Activated B cell treated with CpG ODN at 0.5 μM for 24 hours (primary cell): ENCODE measurements at regions of chr6 and their contacts with region 1.

Region 1: DNA sequence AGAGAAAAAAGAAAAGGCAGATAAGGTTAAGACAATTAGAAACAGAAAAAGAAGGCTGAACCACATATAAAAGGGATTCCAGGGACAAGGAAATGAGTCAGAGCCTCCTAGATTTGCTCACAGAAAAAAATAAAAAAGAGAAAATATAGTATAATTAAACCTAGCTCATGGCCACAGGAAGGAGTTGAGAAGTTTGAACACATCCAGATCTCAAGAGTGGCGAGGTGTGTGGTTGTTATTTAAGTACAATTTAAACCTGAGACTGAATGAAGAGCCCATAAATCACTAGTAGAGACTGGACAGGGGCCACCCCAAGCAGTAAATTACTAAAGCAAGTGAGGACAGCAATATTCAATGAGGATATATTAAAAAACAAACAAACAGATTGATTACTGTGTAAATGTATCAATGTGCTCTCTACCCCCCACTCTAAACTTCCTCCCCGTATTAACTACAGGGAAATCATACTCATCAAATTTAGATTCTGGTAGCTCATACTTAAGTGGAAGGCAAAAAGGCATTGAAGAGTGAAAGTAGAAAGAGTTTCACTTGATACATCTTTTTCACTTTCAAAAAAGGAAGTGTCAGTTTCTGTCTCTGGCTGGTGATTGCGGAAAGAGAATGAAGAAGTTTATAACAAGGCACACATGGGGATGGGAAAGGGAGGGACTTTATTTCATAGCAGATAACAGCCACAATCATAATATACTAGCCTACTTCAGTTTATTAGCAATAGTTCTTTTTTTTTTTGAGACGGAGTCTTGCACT is 49.3 kb upstream of the SCAF8 start:
- DNase-seq: no peak
- ATAC-seq: peak; percentile 89
- H3K4me3 Mint-ChIP-seq: peak overlapping the region; percentile 46
- H3K27ac Mint-ChIP-seq: peak overlapping the region; percentile 92
- H3K4me1 Mint-ChIP-seq: peaks cover 44% of the 10 kb centered on the region
- H3K27me3 Mint-ChIP-seq: no peaks in the 10 kb centered on the region
- CTCF ChIP-seq: no peak

Region 2: GRCh38 chr6:154715446-154715845 is 31.5 kb after region 1 on chr6:
- CTCF ChIA-PET with region 1: no interaction called
- POLR2A ChIA-PET with region 1: interaction called, 5 read pairs
- intact Hi-C with region 1: loop called (anchors 1 kb)
- DNase-seq: no peak
- ATAC-seq: peak; percentile 50
- H3K4me3 Mint-ChIP-seq: no peak overlapping the region
- H3K27ac Mint-ChIP-seq: no peak overlapping the region
- H3K4me1 Mint-ChIP-seq: peaks cover 20% of the 10 kb centered on the region
- H3K27me3 Mint-ChIP-seq: no peaks in the 10 kb centered on the region
- CTCF ChIP-seq: no peak

Region 3: GRCh38 chr6:154928325-154928922 is 244.5 kb after region 1 on chr6:
- CTCF ChIA-PET with region 1: no interaction called
- POLR2A ChIA-PET with region 1: no interaction called
- intact Hi-C with region 1: no loop called
- DNase-seq: no peak
- ATAC-seq: no peak
- H3K4me3 Mint-ChIP-seq: no peak overlapping the region
- H3K27ac Mint-ChIP-seq: no peak overlapping the region
- H3K4me1 Mint-ChIP-seq: peaks cover 19% of the 10 kb centered on the region
- H3K27me3 Mint-ChIP-seq: no peaks in the 10 kb centered on the region
- CTCF ChIP-seq: no peak